ENCODE measurements at regions of chr15 and their contacts with region 1.

Region 1: DNA sequence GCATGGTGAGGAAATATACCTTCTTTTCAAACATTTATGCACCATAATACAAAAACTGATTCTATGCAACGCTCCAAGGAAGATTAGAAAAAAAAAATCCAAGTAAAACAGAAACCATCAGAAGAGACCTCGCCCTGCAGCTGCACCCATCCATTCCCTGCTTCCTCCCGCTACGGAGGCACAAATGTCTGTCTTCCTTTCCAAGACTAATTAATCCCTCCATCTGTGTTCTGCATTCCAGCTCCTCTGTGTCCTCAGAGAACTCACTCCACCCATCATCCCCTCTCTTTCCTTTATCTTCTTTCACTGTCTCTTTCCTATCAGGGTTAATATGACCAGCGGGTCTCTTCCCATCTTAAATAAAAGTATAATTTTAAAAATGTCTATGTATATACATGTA is 196.1 kb downstream of the ADAMTSL3 start:
- DNase-seq: no peak
- ATAC-seq: no peak
- H3K4me3 ChIP-seq: no peak overlapping the region
- H3K27ac ChIP-seq: no peak overlapping the region
- H3K4me1 ChIP-seq: peaks cover 41% of the 10 kb centered on the region
- H3K27me3 ChIP-seq: no peaks in the 10 kb centered on the region
- CTCF ChIP-seq: no peak

Region 2: DNA sequence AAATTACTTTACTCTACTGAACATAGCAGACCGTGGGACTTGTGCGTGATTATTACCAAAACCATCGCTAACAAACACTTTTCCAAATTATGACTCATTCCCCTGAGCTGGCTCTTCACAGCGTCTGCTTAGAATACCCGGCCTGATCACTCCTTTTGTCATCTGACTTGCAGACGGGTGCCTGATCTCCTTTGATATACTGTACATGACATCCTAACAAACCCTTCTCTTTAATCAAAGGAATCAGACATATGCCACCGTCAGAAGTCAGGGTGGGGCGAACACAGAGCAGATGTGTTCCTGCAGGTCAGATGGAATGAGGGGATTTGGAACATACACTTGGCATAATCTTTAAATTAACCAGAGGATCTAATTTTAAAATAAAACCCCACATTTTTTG is 451.4 kb before region 1 on chr15:
- CTCF ChIA-PET with region 1: no interaction called
- POLR2A ChIA-PET with region 1: no interaction called
- intact Hi-C with region 1: no loop called
- DNase-seq: peak; percentile 67
- ATAC-seq: peak; percentile 92
- H3K4me3 ChIP-seq: no peak overlapping the region
- H3K27ac ChIP-seq: 0 out of 2 replicates have a peak overlapping the region, but pooled peaks have one; percentile 12
- H3K4me1 ChIP-seq: peaks cover 9% of the 10 kb centered on the region
- H3K27me3 ChIP-seq: no peaks in the 10 kb centered on the region
- CTCF ChIP-seq: no peak

Region 3: GRCh38 chr15:83815506-83815905 is 34.5 kb before region 1 on chr15:
- CTCF ChIA-PET with region 1: no interaction called
- POLR2A ChIA-PET with region 1: no interaction called
- intact Hi-C with region 1: no loop called
- DNase-seq: no peak
- ATAC-seq: no peak
- H3K4me3 ChIP-seq: no peak overlapping the region
- H3K27ac ChIP-seq: no peak overlapping the region
- H3K4me1 ChIP-seq: peaks cover 17% of the 10 kb centered on the region
- H3K27me3 ChIP-seq: no peaks in the 10 kb centered on the region
- CTCF ChIP-seq: no peak

Region 4: GRCh38 chr15:83887404-83887803 is 37.4 kb after region 1 on chr15:
- CTCF ChIA-PET with region 1: no interaction called
- POLR2A ChIA-PET with region 1: no interaction called
- intact Hi-C with region 1: loop called (anchors 1 kb)
- DNase-seq: peak; percentile 68
- ATAC-seq: peak; percentile 81
- H3K4me3 ChIP-seq: no peak overlapping the region
- H3K27ac ChIP-seq: peak overlapping the region; percentile 35
- H3K4me1 ChIP-seq: peaks cover 15% of the 10 kb centered on the region
- H3K27me3 ChIP-seq: no peaks in the 10 kb centered on the region
- CTCF ChIP-seq: no peak

Region 5: GRCh38 chr15:83955806-83956265 is 105.8 kb after region 1 on chr15:
- CTCF ChIA-PET with region 1: no interaction called
- POLR2A ChIA-PET with region 1: no interaction called
- intact Hi-C with region 1: no loop called
- DNase-seq: no peak
- ATAC-seq: no peak
- H3K4me3 ChIP-seq: no peak overlapping the region
- H3K27ac ChIP-seq: no peak overlapping the region
- H3K4me1 ChIP-seq: no peaks in the 10 kb centered on the region
- H3K27me3 ChIP-seq: no peaks in the 10 kb centered on the region
- CTCF ChIP-seq: no peak

Measured in PC-3 (cell line).